ENCODE measurements at regions of chr17 and their contacts with region 1.

Region 1: GRCh38 chr17:63150994-63151464 is 185.0 kb downstream of the TANC2 start:
- DNase-seq: no peak
- H3K4me3 ChIP-seq: no peak overlapping the region
- H3K27ac ChIP-seq: no peak overlapping the region
- H3K4me1 ChIP-seq: peaks cover 0 to 3% (median 0%) of the 10 kb centered on the region in 4 donors
- H3K27me3 ChIP-seq: no peaks in the 10 kb centered on the region
- CTCF ChIP-seq: no peak
- EP300 ChIP-seq: no peak
- POLR2A ChIP-seq: no peak

Region 2: GRCh38 chr17:63249256-63250004 is 98.4 kb after region 1 on chr17:
- in situ Hi-C with region 1: loop called in 1 of 4 experiments (anchors 25 kb)
- intact Hi-C with region 1: no loop called
- DNase-seq: no peak
- H3K4me3 ChIP-seq: no peak overlapping the region
- H3K27ac ChIP-seq: no peak overlapping the region
- H3K4me1 ChIP-seq: peaks cover 0 to 7% (median 0%) of the 10 kb centered on the region in 4 donors
- H3K27me3 ChIP-seq: no peaks in the 10 kb centered on the region
- CTCF ChIP-seq: no peak
- EP300 ChIP-seq: no peak
- POLR2A ChIP-seq: no peak

Measured in transverse colon (tissue), 4 donors.